Calu3 (cell line): ENCODE measurements at regions of chr3 and their contacts with region 1.

Region 1: DNA sequence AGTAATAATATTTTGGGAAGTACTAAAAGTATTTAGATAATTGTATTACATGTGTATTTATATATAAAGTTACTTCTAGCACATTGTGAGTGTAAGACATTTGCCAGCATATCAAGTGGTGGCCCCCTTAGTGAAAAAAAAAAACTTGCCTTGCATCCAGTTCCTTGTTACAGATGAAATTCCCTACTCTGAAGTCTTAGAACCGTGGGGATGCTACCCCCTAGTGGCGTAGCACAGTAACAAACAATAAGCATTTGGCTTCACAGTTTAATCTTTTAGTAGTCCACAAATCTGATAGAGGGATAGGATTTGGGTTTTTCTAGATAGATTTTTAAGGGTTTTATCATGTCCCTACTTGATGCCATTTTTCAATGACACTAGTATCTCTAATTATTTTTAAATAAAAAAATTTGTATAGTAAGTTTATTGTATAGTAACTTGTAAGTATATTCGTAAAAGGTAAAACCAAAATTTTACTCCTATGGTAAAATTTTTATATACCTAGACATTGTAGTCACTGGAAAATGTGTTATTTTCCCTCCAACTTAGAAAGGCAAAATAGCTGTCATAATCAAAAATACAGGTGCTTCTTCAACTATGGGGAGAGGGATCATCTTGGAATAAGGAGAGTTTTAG is 14.3 kb downstream of the SMC4 start:
- DNase-seq: peak; percentile 89
- H3K4me3 Mint-ChIP-seq: no peak overlapping the region
- H3K27ac Mint-ChIP-seq: no peak overlapping the region
- H3K4me1 Mint-ChIP-seq: peaks cover 27% of the 10 kb centered on the region
- H3K27me3 Mint-ChIP-seq: no peaks in the 10 kb centered on the region
- CTCF ChIP-seq: peak; percentile 89

Region 2: GRCh38 chr3:160084998-160085397 is 328.7 kb before region 1 on chr3:
- CTCF ChIA-PET with region 1: no interaction called
- intact Hi-C with region 1: no loop called
- DNase-seq: no peak
- H3K4me3 Mint-ChIP-seq: no peak overlapping the region
- H3K27ac Mint-ChIP-seq: no peak overlapping the region
- H3K4me1 Mint-ChIP-seq: peaks cover 23% of the 10 kb centered on the region
- H3K27me3 Mint-ChIP-seq: no peaks in the 10 kb centered on the region
- CTCF ChIP-seq: no peak

Region 3: DNA sequence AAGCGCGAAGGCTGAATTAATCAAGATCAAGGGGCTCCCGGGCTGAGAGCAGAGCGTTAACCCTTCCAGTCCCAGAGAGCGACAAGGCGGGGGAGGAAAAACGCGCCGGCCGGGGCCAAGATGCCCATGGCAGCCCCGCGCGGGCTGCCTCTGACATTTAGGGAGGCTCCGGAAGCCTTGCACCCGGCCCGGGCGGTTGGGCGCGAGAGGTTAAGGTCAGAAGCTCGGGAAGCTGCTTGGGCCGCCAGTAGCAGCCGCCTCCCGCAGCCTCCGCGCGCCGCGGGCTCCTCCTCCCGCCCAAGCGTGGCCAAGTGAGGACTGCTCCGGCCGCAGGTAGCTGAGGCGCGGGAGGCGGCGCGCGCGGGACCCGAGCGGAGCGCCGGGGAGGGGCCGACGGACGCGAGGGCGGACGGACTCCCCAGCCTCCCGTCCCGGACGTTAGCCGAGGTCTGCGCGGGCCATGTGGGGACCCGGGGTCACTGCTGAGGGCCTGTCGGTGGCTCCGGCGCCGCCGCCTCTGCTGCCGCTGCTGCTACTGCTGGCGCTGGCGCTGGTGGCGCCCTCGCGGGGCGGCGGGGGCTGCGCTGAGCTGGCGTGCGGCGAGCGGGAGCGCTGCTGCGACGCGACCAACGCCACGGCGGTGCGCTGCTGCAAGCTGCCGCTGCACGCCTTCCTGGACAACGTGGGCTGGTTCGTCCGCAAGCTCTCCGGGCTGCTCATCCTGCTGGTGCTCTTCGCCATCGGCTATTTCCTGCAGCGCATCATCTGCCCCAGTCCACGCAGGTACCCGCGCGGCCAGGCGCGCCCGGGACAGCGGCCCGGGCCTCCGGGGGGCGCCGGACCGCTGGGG is 188.3 kb before region 1 on chr3 and contains the start of gene C3orf80:
- CTCF ChIA-PET with region 1: no interaction called
- intact Hi-C with region 1: loop called (anchors 5 kb)
- DNase-seq: peak; percentile 81
- H3K4me3 Mint-ChIP-seq: peak within 1 kb of the TSS; percentile 85
- H3K27ac Mint-ChIP-seq: peak within 1 kb of the TSS; percentile 59
- H3K4me1 Mint-ChIP-seq: peaks cover 9% of the 10 kb centered on the region
- H3K27me3 Mint-ChIP-seq: peaks cover 13% of the 10 kb centered on the region
- CTCF ChIP-seq: no peak
- total RNA-seq, gene C3orf80: 2.5 and 3.0 TPM in 2 replicates

Region 4: DNA sequence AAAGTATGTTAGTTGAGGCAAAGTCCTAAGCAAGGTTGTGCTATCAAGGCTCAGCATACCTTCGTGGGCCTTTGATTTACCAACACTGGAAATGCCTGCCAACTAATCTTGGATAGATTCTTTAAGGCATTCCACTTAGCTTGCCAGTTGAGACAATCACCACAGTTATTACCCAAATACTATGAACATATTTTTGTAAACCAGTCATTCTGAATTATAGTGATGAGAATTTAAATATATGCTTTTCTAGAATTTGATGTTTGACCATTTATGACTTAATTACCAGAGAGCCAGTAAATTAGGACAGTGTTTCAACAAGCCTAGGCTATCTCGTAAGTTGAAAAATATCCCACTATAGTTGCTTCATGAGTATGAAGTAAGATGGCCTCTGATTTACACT is 20.3 kb after region 1 on chr3:
- CTCF ChIA-PET with region 1: interaction called, 3 read pairs
- intact Hi-C with region 1: loop called (anchors 2 kb)
- DNase-seq: no peak
- H3K4me3 Mint-ChIP-seq: no peak overlapping the region
- H3K27ac Mint-ChIP-seq: no peak overlapping the region
- H3K4me1 Mint-ChIP-seq: no peaks in the 10 kb centered on the region
- H3K27me3 Mint-ChIP-seq: no peaks in the 10 kb centered on the region
- CTCF ChIP-seq: no peak